CD8-positive, alpha-beta T cell (primary cell): ENCODE measurements at regions of chr11 and their contacts with region 1.

Region 1: DNA sequence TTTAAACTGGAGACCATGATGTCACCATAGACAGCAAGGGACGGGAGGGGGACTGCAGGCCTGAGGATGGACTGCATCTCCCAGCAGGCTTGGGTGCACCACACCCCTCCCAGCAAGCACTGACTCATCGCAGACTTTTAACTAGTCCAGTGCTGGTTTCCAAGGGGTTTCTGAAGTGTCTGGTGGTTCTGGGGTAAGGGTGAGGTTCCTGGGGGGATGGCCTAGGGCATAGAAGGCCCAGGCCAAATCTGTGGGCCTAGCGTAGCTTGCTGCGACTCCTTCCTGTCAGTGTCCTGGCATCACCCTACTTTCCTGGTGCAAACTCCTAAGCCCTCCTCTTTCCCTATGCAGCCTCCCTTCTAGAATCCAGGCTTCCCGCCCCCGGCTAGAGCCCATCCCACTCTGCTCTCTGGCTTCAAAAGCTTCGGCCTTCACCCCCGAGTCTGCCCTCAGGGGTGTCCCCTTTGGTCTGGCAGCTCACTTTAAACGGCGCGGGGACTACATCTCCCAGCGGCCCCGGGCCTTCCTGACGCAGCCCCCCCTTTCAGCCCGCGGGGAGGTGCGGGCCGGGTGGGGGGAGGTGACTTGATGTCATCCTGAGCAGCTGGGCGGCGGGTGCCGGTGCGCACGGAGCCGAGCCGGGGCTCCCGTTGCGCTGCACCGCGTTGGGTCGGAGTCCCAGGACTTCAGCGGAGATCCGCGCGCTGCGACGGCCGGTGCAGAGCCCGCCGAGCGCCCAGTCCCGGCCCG is at the start of gene PPP2R5B:
- DNase-seq: peak; percentile 78 to 94 (median 90)
- ATAC-seq: peak; percentile 94
- H3K4me3 ChIP-seq: peak within 1 kb of the TSS; percentile 69 to 76
- H3K4me3 Mint-ChIP-seq: peak within 1 kb of the TSS; percentile 95
- H3K27ac ChIP-seq: peak within 1 kb of the TSS; percentile 58 to 92
- H3K27ac Mint-ChIP-seq: peak within 1 kb of the TSS; percentile 96
- H3K4me1 ChIP-seq: peaks cover 19% of the 10 kb centered on the region
- H3K4me1 Mint-ChIP-seq: peaks cover 15% of the 10 kb centered on the region
- H3K27me3 ChIP-seq: no peaks in the 10 kb centered on the region
- H3K27me3 Mint-ChIP-seq: no peaks in the 10 kb centered on the region
- CTCF ChIP-seq: no peak
- total RNA-seq, gene PPP2R5B: 14.8 to 18.0 TPM

Region 2: GRCh38 chr11:64878494-64879243 is 45.6 kb before region 1 on chr11 and contains the start of gene EHD1:
- CTCF ChIA-PET with region 1: no interaction called
- POLR2A ChIA-PET with region 1: interaction called, 4 read pairs
- intact Hi-C with region 1: loop called (anchors 1 kb)
- DNase-seq: peak; percentile 99 to 100 (median 100)
- ATAC-seq: peak; percentile 82
- H3K4me3 ChIP-seq: peak within 1 kb of the TSS; percentile 87 to 100
- H3K4me3 Mint-ChIP-seq: peak within 1 kb of the TSS; percentile 95
- H3K27ac ChIP-seq: peak within 1 kb of the TSS; percentile 91 to 96
- H3K27ac Mint-ChIP-seq: peak within 1 kb of the TSS; percentile 97
- H3K4me1 ChIP-seq: peaks cover 57% of the 10 kb centered on the region
- H3K4me1 Mint-ChIP-seq: peaks cover 63% of the 10 kb centered on the region
- H3K27me3 ChIP-seq: no peaks in the 10 kb centered on the region
- H3K27me3 Mint-ChIP-seq: no peaks in the 10 kb centered on the region
- CTCF ChIP-seq: peak; percentile 29
- total RNA-seq, gene EHD1: 187 to 212 TPM

Region 3: DNA sequence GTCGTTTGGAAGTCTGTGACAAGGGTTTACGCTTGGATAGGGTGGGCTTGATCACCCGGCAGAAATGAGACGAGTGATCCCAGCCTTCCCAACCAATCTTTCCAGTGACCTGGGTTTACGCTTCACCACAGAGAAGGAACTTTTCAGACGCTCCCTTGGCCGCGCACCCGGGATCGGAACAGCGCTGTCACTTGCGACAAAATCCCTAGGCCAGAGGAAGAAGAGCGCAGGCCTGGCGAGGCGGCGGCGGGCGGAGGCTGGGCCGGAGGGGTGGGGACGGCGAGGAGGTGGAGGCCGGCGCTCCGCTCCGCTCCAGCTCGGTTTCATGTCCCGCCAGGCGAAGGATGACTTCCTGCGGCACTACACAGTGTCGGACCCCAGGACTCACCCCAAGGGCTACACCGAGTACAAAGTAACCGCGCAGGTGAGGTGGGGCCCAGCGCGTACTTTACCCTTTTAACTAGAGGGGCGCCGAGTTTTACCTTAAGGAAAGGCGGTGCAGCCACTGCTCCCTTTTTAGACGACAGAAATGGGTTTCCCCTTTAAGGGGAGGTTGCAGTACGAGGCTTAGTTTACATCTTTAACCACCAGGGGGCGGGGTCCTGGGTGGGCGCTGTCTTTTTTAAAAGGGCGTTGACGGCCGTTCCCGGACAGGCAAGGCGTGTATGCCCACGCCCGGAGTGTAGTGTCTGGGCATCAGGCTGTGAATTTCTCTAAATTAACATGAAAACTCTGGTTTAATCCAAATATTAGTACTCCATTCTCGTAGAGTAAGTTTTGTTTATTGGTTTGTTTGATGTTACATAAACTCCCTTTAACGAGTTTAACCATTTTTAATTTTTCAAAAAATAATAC is 103.2 kb after region 1 on chr11 and contains the start of gene SNX15:
- CTCF ChIA-PET with region 1: no interaction called
- POLR2A ChIA-PET with region 1: no interaction called
- intact Hi-C with region 1: loop called (anchors 1 kb)
- DNase-seq: peak; percentile 77 to 96 (median 90)
- ATAC-seq: peak; percentile 96
- H3K4me3 ChIP-seq: peak within 1 kb of the TSS; percentile 34 to 54
- H3K4me3 Mint-ChIP-seq: peak within 1 kb of the TSS; percentile 69
- H3K27ac ChIP-seq: peak within 1 kb of the TSS; percentile 41 to 71
- H3K27ac Mint-ChIP-seq: peak within 1 kb of the TSS; percentile 80
- H3K4me1 ChIP-seq: peaks cover 19% of the 10 kb centered on the region
- H3K4me1 Mint-ChIP-seq: peaks cover 18% of the 10 kb centered on the region
- H3K27me3 ChIP-seq: no peaks in the 10 kb centered on the region
- H3K27me3 Mint-ChIP-seq: no peaks in the 10 kb centered on the region
- CTCF ChIP-seq: peak; percentile 80
- total RNA-seq, gene SNX15: 10.4 to 14.0 TPM

Region 4: GRCh38 chr11:65083834-65084597 is 159.7 kb after region 1 on chr11 and contains the starts of genes CDCA5 and ZFPL1:
- CTCF ChIA-PET with region 1: interaction called, 3 read pairs
- POLR2A ChIA-PET with region 1: no interaction called
- intact Hi-C with region 1: loop called (anchors 1 kb)
- DNase-seq: peak; percentile 94 to 98 (median 96)
- ATAC-seq: peak; percentile 88
- H3K4me3 ChIP-seq: peak within 1 kb of the TSS; percentile 71 to 87
- H3K4me3 Mint-ChIP-seq: peak within 1 kb of the TSS; percentile 93
- H3K27ac ChIP-seq: peak within 1 kb of the TSS; percentile 90 to 97
- H3K27ac Mint-ChIP-seq: peak within 1 kb of the TSS; percentile 99
- H3K4me1 ChIP-seq: peaks cover 17% of the 10 kb centered on the region
- H3K4me1 Mint-ChIP-seq: peaks cover 27% of the 10 kb centered on the region
- H3K27me3 ChIP-seq: no peaks in the 10 kb centered on the region
- H3K27me3 Mint-ChIP-seq: no peaks in the 10 kb centered on the region
- CTCF ChIP-seq: no peak
- total RNA-seq, gene CDCA5: 0.76 to 1.2 TPM
- total RNA-seq, gene ZFPL1: 52.3 to 52.6 TPM

Region 5: GRCh38 chr11:65261591-65262380 is 337.5 kb after region 1 on chr11 and contains the start of gene POLA2:
- CTCF ChIA-PET with region 1: no interaction called
- POLR2A ChIA-PET with region 1: no interaction called
- intact Hi-C with region 1: loop called in 1 of 2 experiments (anchors 1 kb)
- DNase-seq: peak; percentile 90 to 99 (median 95)
- ATAC-seq: peak; percentile 95
- H3K4me3 ChIP-seq: peak within 1 kb of the TSS; percentile 79 to 85
- H3K4me3 Mint-ChIP-seq: peak within 1 kb of the TSS; percentile 93
- H3K27ac ChIP-seq: peak within 1 kb of the TSS; percentile 85 to 93
- H3K27ac Mint-ChIP-seq: peak within 1 kb of the TSS; percentile 95
- H3K4me1 ChIP-seq: peaks cover 14% of the 10 kb centered on the region
- H3K4me1 Mint-ChIP-seq: peaks cover 43% of the 10 kb centered on the region
- H3K27me3 ChIP-seq: no peaks in the 10 kb centered on the region
- H3K27me3 Mint-ChIP-seq: no peaks in the 10 kb centered on the region
- CTCF ChIP-seq: no peak
- total RNA-seq, gene POLA2: 8.5 to 9.3 TPM